K562 (cell line): ENCODE measurements at regions of chr7 and their contacts with region 1.

Region 1: DNA sequence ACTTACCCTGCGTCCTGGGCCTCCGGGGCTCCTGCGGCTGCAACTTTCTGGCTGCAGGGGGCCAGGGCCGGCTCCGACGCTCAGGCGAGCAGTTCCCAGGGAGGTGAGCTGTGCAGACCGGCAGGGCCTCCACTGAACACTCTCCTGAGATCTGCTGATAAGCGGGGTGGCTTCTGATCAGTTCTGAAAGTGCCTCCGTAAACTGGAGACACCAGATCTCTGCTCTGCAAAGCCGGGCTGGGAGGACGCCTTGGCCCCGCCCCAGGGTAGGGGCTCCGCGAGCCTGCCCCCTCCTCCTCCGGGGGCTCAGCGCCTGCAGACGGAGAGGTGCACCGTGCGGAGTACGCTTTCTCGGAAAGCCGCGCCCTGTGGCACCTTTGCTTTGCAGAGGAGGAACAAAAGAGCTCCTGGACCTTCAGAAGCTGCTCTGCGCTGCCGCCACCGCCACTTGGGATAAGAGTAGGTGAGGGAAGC is 141.3 kb upstream of the VKORC1L1 start:
- DNase-seq: peak; percentile 50 to 80 (median 66)
- ATAC-seq: peak; percentile 98
- H3K4me3 ChIP-seq: peak overlapping the region; percentile 35
- H3K27ac ChIP-seq: no peak overlapping the region
- H3K4me1 ChIP-seq: peaks cover 3 to 8% of the 10 kb centered on the region in 2 experiments; a peak in 4 of 5 replicates
- H3K27me3 ChIP-seq: no peaks in the 10 kb centered on the region
- CTCF ChIP-seq: peak; percentile 33 to 56 (median 45); a peak in 5 of 6 replicates
- EP300 ChIP-seq: no peak
- POLR2A ChIP-seq: no peak
- RAD21 ChIP-seq: no peak; a peak in 1 of 4 replicates

Region 2: GRCh38 chr7:65037740-65038678 is 693.6 kb before region 1 on chr7:
- CTCF ChIA-PET with region 1: no interaction called
- POLR2A ChIA-PET with region 1: no interaction called
- in situ Hi-C with region 1: no loop called
- intact Hi-C with region 1: no loop called
- DNase-seq: peak; percentile 93 to 97 (median 94)
- ATAC-seq: peak; percentile 91
- H3K4me3 ChIP-seq: peak overlapping the region; percentile 79
- H3K27ac ChIP-seq: peak overlapping the region; percentile 89
- H3K4me1 ChIP-seq: peaks cover 0 to 3% of the 10 kb centered on the region in 2 experiments; a peak in 3 of 5 replicates
- H3K27me3 ChIP-seq: no peaks in the 10 kb centered on the region
- CTCF ChIP-seq: 0 out of 6 replicates have a peak, but pooled peaks of 1 of the 3 experiments have one; percentile 7
- EP300 ChIP-seq: no peak
- POLR2A ChIP-seq: peak; percentile 75
- RAD21 ChIP-seq: no peak

Region 3: GRCh38 chr7:65609131-65609530 is 122.5 kb before region 1 on chr7:
- CTCF ChIA-PET with region 1: no interaction called
- POLR2A ChIA-PET with region 1: no interaction called
- in situ Hi-C with region 1: loop called (anchors 25 kb)
- intact Hi-C with region 1: no loop called
- DNase-seq: no peak
- ATAC-seq: no peak
- H3K4me3 ChIP-seq: no peak overlapping the region
- H3K27ac ChIP-seq: no peak overlapping the region
- H3K4me1 ChIP-seq: no peaks in the 10 kb centered on the region
- H3K27me3 ChIP-seq: peaks cover 0 to 3% of the 10 kb centered on the region in 2 experiments; a peak in 2 of 5 replicates
- CTCF ChIP-seq: no peak
- EP300 ChIP-seq: no peak
- POLR2A ChIP-seq: no peak
- RAD21 ChIP-seq: no peak

Region 4: DNA sequence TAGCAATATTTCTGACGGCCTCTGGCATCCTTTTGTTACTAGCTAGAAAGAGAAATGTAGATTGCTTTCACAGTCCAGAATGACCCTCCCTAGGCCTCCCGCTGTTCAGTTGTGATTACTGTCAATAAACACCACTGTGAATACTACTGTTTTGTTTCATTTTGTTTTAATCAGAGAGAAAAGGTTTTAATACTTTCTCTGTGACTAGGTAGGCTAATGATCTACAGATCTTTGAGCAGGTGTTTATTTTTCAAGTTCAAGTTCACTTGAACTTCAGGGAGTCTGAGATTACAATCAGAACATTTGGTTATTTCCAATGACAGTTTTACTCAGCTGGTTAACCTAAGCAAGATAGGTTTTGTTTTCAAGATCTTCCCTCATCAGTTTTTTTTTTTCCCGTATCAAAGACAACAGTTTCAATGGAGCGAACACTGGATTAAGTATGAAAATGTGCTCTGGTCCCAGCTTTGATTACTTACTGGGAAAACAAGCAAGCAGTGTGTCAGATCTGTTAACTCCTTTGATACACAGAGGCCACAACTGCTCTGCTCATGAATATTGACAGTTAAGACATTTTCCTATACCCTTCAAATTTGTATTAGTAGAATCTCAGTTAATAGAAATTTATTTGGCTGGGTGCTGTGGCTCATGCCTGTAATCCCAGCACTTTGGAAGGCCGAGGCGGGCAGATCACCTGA is 176.1 kb after region 1 on chr7:
- CTCF ChIA-PET with region 1: no interaction called
- POLR2A ChIA-PET with region 1: no interaction called
- in situ Hi-C with region 1: no loop called
- intact Hi-C with region 1: no loop called
- DNase-seq: no peak
- ATAC-seq: no peak
- H3K4me3 ChIP-seq: no peak overlapping the region
- H3K27ac ChIP-seq: no peak overlapping the region
- H3K4me1 ChIP-seq: no peaks in the 10 kb centered on the region
- H3K27me3 ChIP-seq: no peaks in the 10 kb centered on the region
- CTCF ChIP-seq: no peak
- EP300 ChIP-seq: no peak
- POLR2A ChIP-seq: no peak
- RAD21 ChIP-seq: no peak

Region 5: GRCh38 chr7:66013916-66014315 is 282.3 kb after region 1 on chr7:
- CTCF ChIA-PET with region 1: no interaction called
- POLR2A ChIA-PET with region 1: no interaction called
- in situ Hi-C with region 1: no loop called
- intact Hi-C with region 1: loop called (anchors 5 kb)
- DNase-seq: peak in 3 of 4 experiments; percentile 16 to 71 (median 40)
- ATAC-seq: peak; percentile 94
- H3K4me3 ChIP-seq: no peak overlapping the region
- H3K27ac ChIP-seq: no peak overlapping the region
- H3K4me1 ChIP-seq: peaks cover 0 to 6% of the 10 kb centered on the region in 2 experiments; a peak in 1 of 5 replicates
- H3K27me3 ChIP-seq: peaks cover 9 to 11% of the 10 kb centered on the region in 2 experiments; a peak in 4 of 5 replicates
- CTCF ChIP-seq: peak; percentile 72 to 80 (median 76)
- EP300 ChIP-seq: no peak
- POLR2A ChIP-seq: no peak
- RAD21 ChIP-seq: peak; percentile 58 to 76